ENCODE measurements at regions of chr10 and their contacts with region 1.

Region 1: GRCh38 chr10:70558871-70559810 is 43.4 kb downstream of the PRF1 start:
- DNase-seq: peak; percentile 74
- H3K4me3 Mint-ChIP-seq: peak overlapping the region; percentile 71
- H3K27ac Mint-ChIP-seq: peak overlapping the region; percentile 65
- H3K4me1 Mint-ChIP-seq: peaks cover 20% of the 10 kb centered on the region
- H3K27me3 Mint-ChIP-seq: peaks cover 2% of the 10 kb centered on the region

Region 2: DNA sequence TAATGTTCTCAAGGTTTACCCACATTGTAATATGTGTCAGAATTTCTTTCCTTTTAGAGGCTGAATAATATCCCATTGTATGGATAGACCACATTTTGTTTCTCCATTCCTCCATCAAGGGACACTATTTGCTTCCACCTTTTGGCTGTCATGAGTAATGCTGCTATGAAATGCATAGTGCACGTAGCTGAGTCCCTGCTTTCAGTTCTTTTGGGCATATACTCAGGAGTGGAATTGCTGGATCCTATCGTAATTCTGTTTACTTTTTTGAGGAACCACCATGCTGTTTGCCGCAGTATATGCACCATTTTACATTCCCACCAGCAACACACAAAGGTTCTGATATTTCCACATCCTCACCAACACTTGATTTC is 16.6 kb before region 1 on chr10:
- CTCF ChIA-PET with region 1: no interaction called
- POLR2A ChIA-PET with region 1: no interaction called
- DNase-seq: no peak
- H3K4me3 Mint-ChIP-seq: no peak overlapping the region
- H3K27ac Mint-ChIP-seq: no peak overlapping the region
- H3K4me1 Mint-ChIP-seq: no peaks in the 10 kb centered on the region
- H3K27me3 Mint-ChIP-seq: no peaks in the 10 kb centered on the region

Region 3: GRCh38 chr10:70602665-70603448 is 43.7 kb after region 1 on chr10 and contains the start of gene PRF1:
- CTCF ChIA-PET with region 1: interaction called, 14 read pairs
- POLR2A ChIA-PET with region 1: interaction called, 4 read pairs
- DNase-seq: peak; percentile 89
- H3K4me3 Mint-ChIP-seq: peak within 1 kb of the TSS; percentile 90
- H3K27ac Mint-ChIP-seq: peak within 1 kb of the TSS; percentile 89
- H3K4me1 Mint-ChIP-seq: peaks cover 35% of the 10 kb centered on the region
- H3K27me3 Mint-ChIP-seq: no peaks in the 10 kb centered on the region
- total RNA-seq, gene PRF1: 136 to 141 TPM

Region 4: DNA sequence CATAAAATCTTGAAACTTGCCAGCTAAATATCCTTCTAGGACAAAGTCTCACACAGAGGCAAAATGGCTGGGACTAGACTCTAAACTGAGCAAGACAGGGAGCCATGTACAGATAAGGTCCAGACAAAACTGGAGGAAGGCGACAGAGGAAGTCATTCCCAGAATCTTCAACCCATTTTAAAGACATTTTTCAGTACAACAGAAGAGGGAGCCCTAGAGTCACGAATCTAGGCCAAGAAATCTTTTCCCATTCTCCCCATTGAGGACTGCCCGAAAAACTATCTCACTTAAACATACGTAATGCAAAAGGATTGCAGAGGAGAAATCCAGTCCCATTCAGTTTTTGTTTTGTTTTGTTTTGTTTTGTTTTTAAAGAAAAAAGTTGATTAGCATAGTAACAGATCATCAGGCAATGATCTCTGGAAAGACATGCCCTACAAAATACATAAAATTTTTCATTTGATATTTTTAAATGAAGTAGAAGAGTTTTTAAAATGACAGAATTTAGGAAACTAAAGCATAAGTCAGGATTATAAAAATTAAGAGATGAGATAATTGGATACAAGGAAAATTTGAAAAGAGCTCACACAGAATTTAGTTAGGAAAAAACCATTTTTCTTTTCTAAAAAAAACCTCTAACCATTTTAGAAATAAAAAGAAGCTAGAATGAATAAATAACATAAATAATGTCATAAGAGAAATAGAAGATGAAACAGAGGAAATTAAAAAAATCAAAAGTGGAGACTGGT is 60.3 kb after region 1 on chr10:
- CTCF ChIA-PET with region 1: interaction called, 16 read pairs
- POLR2A ChIA-PET with region 1: no interaction called
- DNase-seq: no peak
- H3K4me3 Mint-ChIP-seq: no peak overlapping the region
- H3K27ac Mint-ChIP-seq: no peak overlapping the region
- H3K4me1 Mint-ChIP-seq: peaks cover 35% of the 10 kb centered on the region
- H3K27me3 Mint-ChIP-seq: peaks cover 4% of the 10 kb centered on the region

Region 5: GRCh38 chr10:70664702-70665195 is 105.6 kb after region 1 on chr10:
- CTCF ChIA-PET with region 1: no interaction called
- POLR2A ChIA-PET with region 1: no interaction called
- DNase-seq: no peak
- H3K4me3 Mint-ChIP-seq: no peak overlapping the region
- H3K27ac Mint-ChIP-seq: no peak overlapping the region
- H3K4me1 Mint-ChIP-seq: peaks cover 7% of the 10 kb centered on the region
- H3K27me3 Mint-ChIP-seq: peaks cover 15% of the 10 kb centered on the region

Region 6: DNA sequence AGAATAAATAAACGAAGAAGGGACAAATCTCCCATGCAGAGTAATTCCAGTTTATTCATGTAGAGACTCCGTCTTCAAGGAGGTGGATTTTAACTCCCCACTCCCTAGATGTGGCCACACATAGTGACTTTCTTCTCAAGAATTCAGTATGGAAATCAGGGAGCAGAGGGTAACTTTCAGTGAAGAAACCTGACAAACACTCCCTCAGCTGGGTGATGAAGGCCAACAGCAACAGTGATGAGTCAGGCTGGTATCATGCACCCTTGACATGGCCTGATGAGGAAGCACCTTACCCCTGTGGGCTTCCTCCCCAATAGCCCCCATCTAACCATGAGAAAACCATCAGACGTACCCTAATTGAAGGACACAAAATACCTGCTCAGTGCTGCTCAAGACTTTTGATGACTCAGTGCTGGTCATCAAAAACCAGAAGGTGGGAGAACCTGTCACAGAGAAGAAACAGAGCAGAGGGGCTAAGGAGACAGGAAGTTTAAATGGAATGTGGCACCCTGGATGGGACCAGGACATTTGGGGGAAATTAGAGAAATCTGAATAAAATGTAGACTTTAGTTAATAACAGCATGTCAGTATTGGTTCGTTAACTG is 163.8 kb after region 1 on chr10:
- CTCF ChIA-PET with region 1: no interaction called
- POLR2A ChIA-PET with region 1: no interaction called
- DNase-seq: no peak
- H3K4me3 Mint-ChIP-seq: no peak overlapping the region
- H3K27ac Mint-ChIP-seq: no peak overlapping the region
- H3K4me1 Mint-ChIP-seq: no peaks in the 10 kb centered on the region
- H3K27me3 Mint-ChIP-seq: no peaks in the 10 kb centered on the region

Region 7: DNA sequence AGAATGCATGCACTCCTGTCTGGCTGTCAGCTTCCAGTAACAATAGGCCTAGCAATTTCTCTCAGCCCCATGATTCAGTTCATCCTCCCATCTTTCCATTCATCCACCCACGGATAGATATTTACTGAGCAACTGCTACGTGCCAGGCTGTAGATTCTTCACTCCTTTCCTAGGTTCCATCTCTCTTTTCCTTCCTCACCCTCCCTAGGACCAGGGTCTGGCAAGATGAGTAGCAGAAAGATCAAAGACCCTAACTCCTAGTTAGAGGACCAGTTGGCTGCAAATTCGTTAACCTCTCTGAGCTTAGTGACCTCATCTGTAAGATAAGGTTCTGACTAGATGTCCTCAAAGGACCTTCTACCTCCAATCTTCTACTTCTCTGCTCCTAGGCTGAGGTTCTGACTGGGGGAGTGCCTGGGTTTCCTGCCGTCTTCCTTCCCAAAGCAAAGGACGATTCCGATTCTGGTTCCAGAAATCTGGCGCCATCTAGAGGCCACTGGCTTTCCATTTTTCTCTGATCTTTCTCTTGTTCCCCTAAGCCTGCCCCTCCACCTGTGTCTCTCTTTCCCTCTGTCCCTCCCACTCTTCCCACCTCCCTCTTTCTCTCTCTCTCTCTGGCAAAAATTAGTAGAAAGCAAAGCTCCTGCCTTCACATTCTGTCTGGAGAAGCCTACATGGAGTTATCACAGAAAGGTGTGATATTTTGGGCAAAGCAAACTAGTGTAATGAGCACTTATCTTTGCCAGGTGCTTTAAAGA is 199.8 kb after region 1 on chr10:
- CTCF ChIA-PET with region 1: interaction called, 13 read pairs
- POLR2A ChIA-PET with region 1: no interaction called
- DNase-seq: peak; percentile 69
- H3K4me3 Mint-ChIP-seq: no peak overlapping the region
- H3K27ac Mint-ChIP-seq: no peak overlapping the region
- H3K4me1 Mint-ChIP-seq: peaks cover 8% of the 10 kb centered on the region
- H3K27me3 Mint-ChIP-seq: peaks cover 3% of the 10 kb centered on the region

Measured in activated CD4-positive, alpha-beta memory T cell treated with anti-CD3 and anti-CD28 coated beads, Interleukin-2, amount 10 ng/mL, durations not matched to agents 7 days and 5 days (primary cell).